ENCODE measurements at regions of chr12 and their contacts with region 1.

Region 1: DNA sequence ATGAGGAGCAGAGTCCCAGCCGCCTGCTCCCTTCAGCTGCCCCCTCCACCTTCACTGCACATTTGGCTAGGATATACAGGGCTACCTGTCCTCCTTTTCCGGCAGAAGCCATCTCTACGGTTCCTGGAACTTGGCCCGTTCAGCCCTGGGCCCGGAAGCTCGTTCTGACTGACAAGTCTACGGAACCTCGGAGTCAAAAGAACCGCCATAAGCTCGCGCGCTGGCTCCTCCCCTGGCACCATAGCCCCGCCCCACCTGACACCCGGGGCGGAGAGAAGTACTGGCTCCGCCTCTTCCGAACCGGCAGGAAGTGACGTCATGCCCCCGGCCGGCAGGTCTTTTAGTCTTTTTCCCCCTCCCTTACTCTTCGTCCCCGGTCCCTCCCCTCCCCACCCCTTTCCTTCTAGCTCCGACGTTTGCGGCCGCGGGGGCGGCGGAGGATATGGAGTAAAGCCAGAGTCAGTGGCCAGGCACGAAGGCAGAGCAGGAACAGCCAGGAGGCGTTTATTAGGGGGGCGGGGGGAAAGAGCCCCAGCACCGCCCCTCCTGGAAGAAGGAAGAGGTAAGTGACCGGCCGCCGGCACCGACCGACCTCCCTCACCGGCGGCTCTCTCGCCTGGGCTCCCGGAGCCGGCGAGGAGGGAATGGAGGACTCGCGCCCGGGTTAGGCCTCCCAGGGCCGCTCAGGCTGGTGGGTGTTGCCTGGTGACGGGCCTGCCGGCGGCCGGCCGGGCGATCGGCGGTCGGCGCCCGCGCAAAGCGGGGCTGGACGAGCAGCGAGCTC is at the starts of genes DEPDC4 and SCYL2:
- DNase-seq: peak; percentile 96 to 98 (median 96)
- ATAC-seq: peak; percentile 85
- H3K4me3 ChIP-seq: peak within 1 kb of the TSS; percentile 95
- H3K27ac ChIP-seq: peak within 1 kb of the TSS; percentile 96
- H3K4me1 ChIP-seq: peaks cover 0 to 10% of the 10 kb centered on the region in 2 experiments; a peak in 2 of 5 replicates
- H3K27me3 ChIP-seq: no peaks in the 10 kb centered on the region
- CTCF ChIP-seq: no peak
- EP300 ChIP-seq: no peak; the same call in none of the 2 replicates
- POLR2A ChIP-seq: peak; percentile 90
- RAD21 ChIP-seq: no peak
- polyA plus RNA-seq, gene DEPDC4: 11.9 to 13.2 TPM
- polyA plus RNA-seq, gene SCYL2: 9.9 to 11.8 TPM

Region 2: DNA sequence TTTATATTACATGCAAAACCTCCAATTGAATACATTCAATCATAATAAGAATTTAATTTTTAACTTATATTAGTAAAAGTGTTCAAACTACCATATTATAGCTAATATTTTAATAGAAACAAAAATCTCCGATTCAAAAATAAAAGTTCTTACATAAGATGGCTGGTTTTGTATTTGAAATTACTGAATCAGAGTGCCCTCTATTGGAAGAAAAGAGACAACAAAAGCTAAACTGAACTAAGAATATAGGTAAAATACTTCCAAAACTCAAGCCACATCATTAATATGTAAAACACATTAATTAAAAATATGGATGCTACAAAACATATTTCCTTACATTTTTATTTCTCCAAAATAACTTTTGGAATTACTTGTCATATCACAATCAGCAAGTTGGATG is 499.2 kb before region 1 on chr12:
- CTCF ChIA-PET with region 1: no interaction called
- POLR2A ChIA-PET with region 1: no interaction called
- in situ Hi-C with region 1: no loop called
- intact Hi-C with region 1: no loop called
- DNase-seq: peak in 1 of 4 experiments; percentile 1
- ATAC-seq: no peak
- H3K4me3 ChIP-seq: no peak overlapping the region
- H3K27ac ChIP-seq: no peak overlapping the region
- H3K4me1 ChIP-seq: no peaks in the 10 kb centered on the region
- H3K27me3 ChIP-seq: no peaks in the 10 kb centered on the region
- CTCF ChIP-seq: peak in 1 of 3 experiments; percentile 22; a peak in 2 of 6 replicates
- EP300 ChIP-seq: no peak
- POLR2A ChIP-seq: no peak
- RAD21 ChIP-seq: 0 out of 4 replicates have a peak, but pooled peaks of 1 of the 2 experiments have one; percentile 6

Region 3: DNA sequence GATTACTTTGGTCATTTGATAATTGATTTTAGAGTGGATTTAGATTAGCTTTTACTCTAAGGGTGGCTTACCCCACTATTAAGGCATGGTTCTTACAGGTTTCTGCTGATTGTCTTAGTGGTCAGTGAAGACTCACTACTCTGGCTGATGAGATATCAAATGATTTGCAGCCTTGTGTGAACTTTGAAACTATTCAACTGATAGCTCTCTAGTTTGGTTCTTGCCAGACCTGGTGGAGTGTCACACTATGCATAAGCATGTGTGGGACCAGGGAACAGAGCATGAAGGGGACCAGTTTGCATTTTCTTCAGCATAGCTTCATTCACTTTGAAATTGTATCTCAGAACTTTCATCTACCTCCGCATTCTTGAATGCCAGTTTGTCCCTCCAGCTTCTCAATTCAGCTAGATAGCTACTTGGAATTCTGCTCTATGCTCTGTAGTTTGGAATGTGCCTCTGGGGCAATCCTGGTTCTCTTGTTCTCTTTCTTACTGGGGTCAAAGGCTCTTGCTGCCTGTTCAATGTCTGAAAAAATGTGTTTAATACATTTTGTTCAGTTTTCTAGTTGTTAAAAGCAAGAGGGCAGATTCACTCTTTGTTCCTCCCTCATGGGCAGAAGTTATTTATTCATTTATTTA is 12.7 kb after region 1 on chr12:
- CTCF ChIA-PET with region 1: no interaction called
- POLR2A ChIA-PET with region 1: interaction called, 20 read pairs
- in situ Hi-C with region 1: no loop called
- intact Hi-C with region 1: no loop called
- DNase-seq: peak in 2 of 4 experiments; percentile 7 to 24
- ATAC-seq: peak; percentile 65
- H3K4me3 ChIP-seq: no peak overlapping the region
- H3K27ac ChIP-seq: peak overlapping the region; percentile 39; the same call in 2 of the 3 replicates
- H3K4me1 ChIP-seq: peaks cover 0 to 12% of the 10 kb centered on the region in 2 experiments; a peak in 3 of 5 replicates
- H3K27me3 ChIP-seq: no peaks in the 10 kb centered on the region
- CTCF ChIP-seq: no peak
- EP300 ChIP-seq: no peak
- POLR2A ChIP-seq: no peak
- RAD21 ChIP-seq: no peak

Region 4: DNA sequence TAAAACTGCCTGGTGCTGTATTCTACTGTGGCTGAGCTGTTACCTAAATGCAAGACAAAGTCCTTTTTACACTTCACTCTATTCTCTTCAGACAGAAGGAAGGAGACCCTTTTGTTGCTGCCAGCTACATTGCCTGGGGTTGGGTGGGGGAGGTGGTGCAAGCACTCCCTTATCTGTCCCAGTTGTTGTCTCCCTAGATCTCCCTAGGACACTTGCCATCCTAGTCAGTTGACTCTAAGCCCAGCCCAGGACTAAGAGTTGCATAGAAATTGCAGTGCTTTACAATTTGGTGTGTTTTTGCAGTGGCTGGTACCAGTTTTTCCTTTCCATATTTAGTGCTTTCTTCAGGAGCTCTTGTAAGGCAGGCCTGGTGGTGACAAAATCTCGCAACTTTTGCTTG is 35.1 kb after region 1 on chr12:
- CTCF ChIA-PET with region 1: no interaction called
- POLR2A ChIA-PET with region 1: interaction called, 3 read pairs
- in situ Hi-C with region 1: no loop called
- intact Hi-C with region 1: loop called (anchors 5 kb)
- DNase-seq: peak in 2 of 4 experiments; percentile 11 to 25
- ATAC-seq: peak; percentile 74
- H3K4me3 ChIP-seq: no peak overlapping the region
- H3K27ac ChIP-seq: no peak overlapping the region
- H3K4me1 ChIP-seq: no peaks in the 10 kb centered on the region
- H3K27me3 ChIP-seq: no peaks in the 10 kb centered on the region
- CTCF ChIP-seq: no peak
- EP300 ChIP-seq: no peak
- POLR2A ChIP-seq: no peak
- RAD21 ChIP-seq: no peak